ENCODE measurements at regions of chr12 and their contacts with region 1.

Region 1: DNA sequence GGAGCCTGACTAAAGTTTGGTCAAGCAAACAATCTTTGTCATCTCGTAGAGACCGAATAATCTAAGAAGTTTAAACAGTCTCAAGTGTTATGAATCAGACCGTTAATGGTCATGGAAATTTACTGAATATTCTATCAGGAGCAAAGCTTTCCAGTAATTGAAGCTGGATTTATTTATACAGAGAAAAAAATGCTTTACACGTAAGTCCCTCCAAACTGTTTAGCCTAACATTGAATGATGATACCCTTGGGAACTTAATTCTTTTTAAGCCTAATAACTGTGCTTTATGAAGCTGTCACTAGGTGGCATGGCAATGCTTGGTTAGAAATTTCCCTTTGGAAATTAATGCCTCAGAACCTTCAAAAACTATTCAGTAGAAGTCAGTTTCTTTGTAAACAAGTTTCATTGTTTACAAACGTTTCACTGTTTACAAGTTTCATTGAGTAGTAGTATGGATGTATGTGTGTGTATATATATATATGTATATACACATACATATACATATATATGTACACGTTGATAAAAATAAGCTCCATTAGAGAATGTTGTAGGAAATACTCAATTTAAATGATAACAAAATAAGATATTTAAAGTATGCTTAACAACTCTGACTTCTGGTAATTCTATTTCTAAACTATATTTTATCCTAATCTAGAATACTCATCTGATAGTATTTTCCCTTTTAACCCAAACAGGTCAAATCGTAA is 32.1 kb downstream of the DEPDC4 start:
- DNase-seq: no peak

Region 2: GRCh38 chr12:99810718-99811593 is 423.8 kb before region 1 on chr12:
- intact Hi-C with region 1: no loop called
- DNase-seq: peak in 1 of 10 donors; percentile 17

Region 3: GRCh38 chr12:100043631-100044030 is 191.1 kb before region 1 on chr12:
- intact Hi-C with region 1: no loop called
- DNase-seq: no peak

Region 4: GRCh38 chr12:100077367-100077766 is 157.4 kb before region 1 on chr12:
- intact Hi-C with region 1: no loop called
- DNase-seq: no peak

Region 5: DNA sequence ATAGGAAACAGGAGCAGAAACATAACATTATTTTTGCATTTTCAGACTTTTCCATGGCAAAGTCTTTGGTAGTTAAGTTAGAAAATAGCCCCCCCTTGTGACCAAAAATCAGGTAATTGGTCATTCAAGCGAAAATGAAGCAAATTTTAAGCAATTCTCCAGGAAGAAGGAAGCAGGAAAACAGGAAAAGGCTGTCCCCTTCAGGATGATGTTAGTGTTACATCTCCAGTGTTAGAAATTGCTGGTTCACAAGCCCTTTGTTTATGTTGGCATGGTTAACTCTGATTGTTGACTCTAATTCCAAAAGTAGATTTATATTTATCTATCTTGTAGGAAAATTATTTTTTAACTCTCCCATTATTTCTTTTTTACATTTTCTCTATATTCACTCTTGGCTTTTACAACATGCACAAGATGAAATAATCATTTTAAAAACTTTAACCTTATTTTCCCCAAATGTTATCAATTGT is 319.9 kb after region 1 on chr12:
- intact Hi-C with region 1: loop called (anchors 2 kb)
- DNase-seq: no peak

Region 6: DNA sequence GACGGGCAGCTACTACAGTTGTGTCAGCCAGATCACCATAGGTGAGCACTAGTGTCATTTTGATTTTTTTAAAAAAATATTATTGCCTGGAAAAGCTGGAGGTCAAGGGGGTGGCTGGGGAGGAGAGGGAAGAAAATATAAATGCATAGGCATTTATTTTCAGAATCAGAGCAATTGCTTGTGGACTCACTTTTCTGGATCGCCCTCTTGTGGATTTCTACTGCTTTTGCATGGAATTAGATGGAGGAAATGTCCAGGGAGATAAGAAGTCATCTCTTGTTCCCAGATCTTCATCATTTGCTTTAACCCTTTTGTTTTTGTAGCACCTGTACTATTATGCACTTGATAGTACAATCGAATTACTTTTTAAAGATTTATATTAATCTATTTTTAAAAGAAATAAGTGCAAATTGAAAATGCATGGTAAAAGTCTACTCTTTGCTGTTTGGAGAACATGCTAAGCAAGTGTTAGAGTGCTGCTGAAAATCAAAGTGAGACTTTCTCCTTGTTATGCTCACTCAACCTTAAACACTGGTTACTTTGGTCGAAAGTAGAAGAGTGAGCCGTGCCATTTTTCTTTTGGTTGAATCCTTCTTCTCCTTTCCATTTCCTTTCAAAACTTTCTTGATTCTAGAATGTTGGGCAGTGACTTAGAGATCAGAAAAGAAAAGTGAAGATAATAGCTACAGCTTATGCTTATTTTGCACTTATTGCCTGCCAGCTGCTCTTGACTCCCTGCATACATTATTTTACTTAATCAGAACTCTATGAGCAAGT is 499.3 kb after region 1 on chr12:
- intact Hi-C with region 1: loop called (anchors 10 kb)
- DNase-seq: no peak